ENCODE measurements at regions of chr19 and their contacts with region 1.

Region 1: GRCh38 chr19:2084993-2085720 is 11.0 kb downstream of the MOB3A start:
- DNase-seq: peak; percentile 95
- H3K4me3 Mint-ChIP-seq: peak overlapping the region; percentile 98
- H3K27ac Mint-ChIP-seq: peak overlapping the region; percentile 100
- H3K4me1 Mint-ChIP-seq: peaks cover 56% of the 10 kb centered on the region
- H3K27me3 Mint-ChIP-seq: no peaks in the 10 kb centered on the region

Region 2: DNA sequence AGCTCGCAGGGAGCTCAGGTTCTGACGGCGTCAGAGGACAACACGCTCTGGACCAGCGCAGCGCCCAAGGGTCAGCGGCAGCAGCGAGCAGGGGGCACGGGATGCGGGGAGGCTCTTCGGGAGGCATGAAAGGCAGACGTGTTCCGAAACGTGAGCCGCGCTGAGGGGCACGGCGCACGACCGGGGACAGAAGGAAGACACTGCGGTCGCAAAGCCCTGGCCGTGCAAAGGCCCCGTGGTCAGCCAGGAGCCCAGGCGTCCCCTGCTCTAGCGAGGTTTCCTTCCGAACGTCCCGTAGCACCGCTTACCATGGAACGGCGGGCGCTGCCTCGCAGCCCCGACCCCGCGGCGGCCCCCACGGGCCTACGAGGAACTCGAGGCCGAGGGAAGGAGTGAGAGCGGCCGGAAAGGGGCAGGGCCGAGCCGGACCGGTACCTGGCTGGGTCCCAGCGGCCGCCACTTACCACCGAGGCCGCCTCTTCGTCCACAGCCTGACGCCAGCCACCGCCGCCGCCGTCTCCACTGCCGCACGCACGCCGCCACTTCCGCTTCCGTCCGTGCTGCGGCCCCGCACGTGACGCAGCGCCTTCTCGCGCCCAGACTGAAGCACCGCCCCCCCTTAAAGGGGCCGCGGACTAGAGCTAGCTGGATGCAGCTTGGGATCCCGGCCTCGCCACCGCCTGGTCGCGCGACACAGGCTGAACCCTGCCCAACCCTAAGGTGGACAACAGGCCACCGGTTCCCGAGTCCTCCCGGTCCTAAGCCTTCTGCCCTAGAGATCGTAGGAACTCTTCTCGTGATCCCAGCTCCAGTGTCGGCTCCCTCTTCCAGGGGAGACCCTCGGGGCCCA is 209.3 kb before region 1 on chr19:
- intact Hi-C with region 1: loop called (anchors 5 kb)
- DNase-seq: peak; percentile 86
- H3K4me3 Mint-ChIP-seq: peak overlapping the region; percentile 99
- H3K27ac Mint-ChIP-seq: peak overlapping the region; percentile 95
- H3K4me1 Mint-ChIP-seq: peaks cover 12% of the 10 kb centered on the region
- H3K27me3 Mint-ChIP-seq: no peaks in the 10 kb centered on the region

Region 3: GRCh38 chr19:2016041-2016807 is 68.9 kb before region 1 on chr19:
- intact Hi-C with region 1: loop called (anchors 5 kb)
- DNase-seq: peak; percentile 58
- H3K4me3 Mint-ChIP-seq: peak overlapping the region; percentile 78
- H3K27ac Mint-ChIP-seq: peak overlapping the region; percentile 17
- H3K4me1 Mint-ChIP-seq: peaks cover 8% of the 10 kb centered on the region
- H3K27me3 Mint-ChIP-seq: no peaks in the 10 kb centered on the region

Region 4: DNA sequence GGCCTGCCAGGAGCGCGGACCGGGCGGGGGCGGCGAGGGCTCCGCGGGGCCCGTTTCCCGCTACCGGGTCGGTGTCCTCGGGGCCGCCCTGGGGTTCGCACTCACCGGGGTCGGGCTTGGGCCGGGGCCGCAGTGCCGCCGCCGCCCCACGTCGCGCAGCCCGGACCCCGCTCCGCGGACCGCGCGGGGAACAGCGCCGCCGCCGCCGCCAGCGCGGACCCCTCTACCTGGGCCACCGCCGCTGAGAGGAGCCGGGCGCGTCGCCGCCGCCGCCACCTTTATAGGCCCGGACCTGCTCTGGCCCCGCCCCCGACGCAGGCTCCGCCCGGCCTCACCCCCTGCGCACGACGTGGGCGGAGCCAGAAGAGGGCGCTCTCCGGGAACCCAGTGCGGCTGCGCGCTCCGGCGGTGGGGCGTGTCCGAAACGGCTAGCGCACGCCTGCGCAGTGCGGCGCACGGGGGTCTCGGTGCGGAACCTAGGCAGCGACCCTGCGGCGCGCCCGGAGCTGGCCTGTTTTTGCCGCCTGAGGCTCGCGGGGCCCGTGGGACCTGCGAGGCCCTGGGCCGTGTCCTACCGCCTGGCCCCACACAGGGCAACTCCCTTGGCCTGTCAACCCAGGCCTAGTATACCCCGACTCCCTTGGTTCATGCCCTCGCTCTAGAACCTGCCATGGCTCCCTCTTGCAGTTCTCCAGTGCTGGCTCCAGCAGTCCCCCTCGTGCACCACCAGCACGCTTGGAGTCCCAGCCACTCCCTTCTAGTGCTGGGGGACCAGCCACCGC is 34.0 kb before region 1 on chr19 and contains the start of gene MKNK2:
- intact Hi-C with region 1: loop called (anchors 5 kb)
- DNase-seq: peak; percentile 91
- H3K4me3 Mint-ChIP-seq: peak within 1 kb of the TSS; percentile 82
- H3K27ac Mint-ChIP-seq: peak within 1 kb of the TSS; percentile 86
- H3K4me1 Mint-ChIP-seq: peaks cover 25% of the 10 kb centered on the region
- H3K27me3 Mint-ChIP-seq: no peaks in the 10 kb centered on the region
- total RNA-seq, gene MKNK2: 161 and 176 TPM in 2 replicates

Region 5: GRCh38 chr19:2096480-2097329 is 11.5 kb after region 1 on chr19 and contains the start of gene IZUMO4:
- intact Hi-C with region 1: loop called (anchors 1 kb)
- DNase-seq: peak; percentile 98
- H3K4me3 Mint-ChIP-seq: peak within 1 kb of the TSS; percentile 97
- H3K27ac Mint-ChIP-seq: peak within 1 kb of the TSS; percentile 84
- H3K4me1 Mint-ChIP-seq: peaks cover 15% of the 10 kb centered on the region
- H3K27me3 Mint-ChIP-seq: no peaks in the 10 kb centered on the region
- total RNA-seq, gene IZUMO4: 7.6 and 9.5 TPM in 2 replicates

Region 6: DNA sequence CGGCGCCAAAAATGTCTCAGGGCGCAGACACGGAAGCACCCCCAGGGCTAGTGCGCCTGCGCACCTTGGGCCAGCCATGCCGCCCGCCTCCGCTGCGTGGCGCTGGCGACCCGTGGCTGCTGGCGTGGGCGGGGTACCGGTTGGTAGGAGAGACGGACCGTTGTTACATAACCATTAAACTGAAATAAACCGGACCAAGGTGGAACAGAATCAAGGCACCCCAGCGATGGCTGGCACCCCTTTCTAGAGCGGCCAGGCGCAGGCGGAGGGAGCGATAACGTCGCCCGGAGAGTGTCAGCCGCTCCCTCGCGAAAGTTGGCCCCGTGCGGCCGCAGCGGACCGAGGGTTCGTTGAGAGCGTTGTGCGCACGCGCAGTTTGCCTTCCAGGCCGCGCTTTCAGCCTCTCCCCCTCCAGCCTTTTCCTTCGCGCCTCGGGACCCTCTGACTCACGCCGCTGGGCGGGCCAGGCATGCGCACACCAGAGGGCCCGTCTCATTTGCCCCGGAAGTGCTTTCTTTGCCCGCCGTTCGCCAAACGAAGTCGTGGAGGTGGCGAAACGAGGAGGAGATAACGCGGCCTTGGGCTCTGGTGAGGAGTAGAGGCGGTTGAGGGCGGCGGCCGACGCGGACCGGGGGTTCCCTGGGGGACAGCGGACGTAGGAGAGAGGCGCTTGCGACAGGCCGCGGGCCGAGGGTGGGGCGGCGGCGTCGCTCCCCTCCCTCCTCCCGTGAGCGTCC is 151.3 kb after region 1 on chr19 and contains the starts of genes PLEKHJ1 and SF3A2:
- intact Hi-C with region 1: loop called (anchors 5 kb)
- DNase-seq: peak; percentile 97
- H3K4me3 Mint-ChIP-seq: peak within 1 kb of the TSS; percentile 99
- H3K27ac Mint-ChIP-seq: peak within 1 kb of the TSS; percentile 99
- H3K4me1 Mint-ChIP-seq: peaks cover 43% of the 10 kb centered on the region
- H3K27me3 Mint-ChIP-seq: no peaks in the 10 kb centered on the region
- total RNA-seq, gene PLEKHJ1: 75.7 and 77.2 TPM in 2 replicates
- total RNA-seq, gene SF3A2: 153 and 154 TPM in 2 replicates

Measured in activated T-helper 2 cell treated with anti-CD3 and anti-CD28 coated beads, Interferon-gamma antibody, Interleukin-2, Interleukin-4, amounts not matched to agents 10 μg/mL and 5 μg/mL and 100 μg/mL, durations not matched to agents 14 hours and 24 hours and 36 hours (primary cell).